Esophagus muscularis mucosa (tissue), 4 donors: ENCODE measurements at regions of chr3 and their contacts with region 1.

Region 1: GRCh38 chr3:71185733-71186455 is 397.6 kb downstream of the FOXP1 start:
- DNase-seq: no peak
- H3K4me3 ChIP-seq: no peak overlapping the region
- H3K27ac ChIP-seq: no peak overlapping the region
- H3K4me1 ChIP-seq: peaks cover 0 to 8% (median 2%) of the 10 kb centered on the region in 4 donors
- H3K27me3 ChIP-seq: no peaks in the 10 kb centered on the region
- CTCF ChIP-seq: no peak
- EP300 ChIP-seq: no peak
- POLR2A ChIP-seq: no peak

Region 2: GRCh38 chr3:71149959-71150954 is 35.6 kb before region 1 on chr3:
- intact Hi-C with region 1: loop called (anchors 5 kb)
- DNase-seq: no peak
- H3K4me3 ChIP-seq: no peak overlapping the region
- H3K27ac ChIP-seq: no peak overlapping the region
- H3K4me1 ChIP-seq: peaks cover 0 to 26% (median 4%) of the 10 kb centered on the region in 4 donors
- H3K27me3 ChIP-seq: no peaks in the 10 kb centered on the region
- CTCF ChIP-seq: no peak
- EP300 ChIP-seq: no peak
- POLR2A ChIP-seq: no peak

Region 3: GRCh38 chr3:71277341-71277740 is 91.4 kb after region 1 on chr3:
- intact Hi-C with region 1: no loop called
- DNase-seq: no peak
- H3K4me3 ChIP-seq: no peak overlapping the region
- H3K27ac ChIP-seq: no peak overlapping the region
- H3K4me1 ChIP-seq: peaks cover 0 to 16% (median 3%) of the 10 kb centered on the region in 4 donors
- H3K27me3 ChIP-seq: no peaks in the 10 kb centered on the region
- CTCF ChIP-seq: no peak
- EP300 ChIP-seq: no peak
- POLR2A ChIP-seq: no peak

Region 4: GRCh38 chr3:71310359-71310979 is 124.6 kb after region 1 on chr3:
- intact Hi-C with region 1: no loop called
- DNase-seq: no peak
- H3K4me3 ChIP-seq: no peak overlapping the region
- H3K27ac ChIP-seq: peak overlapping the region; percentile 50 to 77 (median 67)
- H3K4me1 ChIP-seq: peaks cover 14 to 70% (median 64%) of the 10 kb centered on the region in 4 donors
- H3K27me3 ChIP-seq: no peaks in the 10 kb centered on the region
- CTCF ChIP-seq: peak in 1 of 3 experiments; percentile 24
- EP300 ChIP-seq: no peak
- POLR2A ChIP-seq: no peak